AG04450 (cell line): ENCODE measurements at regions of chr6 and their contacts with region 1.

Region 1: GRCh38 chr6:25992413-25993037 is 29.9 kb downstream of the TRIM38 start:
- DNase-seq: peak; percentile 81
- H3K4me3 ChIP-seq: peak overlapping the region; percentile 70
- H3K27ac ChIP-seq: peak overlapping the region; percentile 83
- H3K27me3 ChIP-seq: no peaks in the 10 kb centered on the region
- CTCF ChIP-seq: peak; percentile 94

Region 2: GRCh38 chr6:25788305-25788922 is 204.1 kb before region 1 on chr6:
- CTCF ChIA-PET with region 1: interaction called, 16 read pairs
- POLR2A ChIA-PET with region 1: no interaction called
- DNase-seq: peak; percentile 13
- H3K4me3 ChIP-seq: no peak overlapping the region
- H3K27ac ChIP-seq: no peak overlapping the region
- H3K27me3 ChIP-seq: no peaks in the 10 kb centered on the region
- CTCF ChIP-seq: peak; percentile 62

Region 3: GRCh38 chr6:25971187-25971811 is 21.2 kb before region 1 on chr6:
- CTCF ChIA-PET with region 1: interaction called, 26 read pairs
- POLR2A ChIA-PET with region 1: interaction called, 6 read pairs
- DNase-seq: peak; percentile 59
- H3K4me3 ChIP-seq: no peak overlapping the region
- H3K27ac ChIP-seq: no peak overlapping the region
- H3K27me3 ChIP-seq: no peaks in the 10 kb centered on the region
- CTCF ChIP-seq: no peak

Region 4: GRCh38 chr6:25981568-25982263 is 10.8 kb before region 1 on chr6:
- CTCF ChIA-PET with region 1: interaction called, 49 read pairs
- POLR2A ChIA-PET with region 1: interaction called, 9 read pairs
- DNase-seq: no peak
- H3K4me3 ChIP-seq: no peak overlapping the region
- H3K27ac ChIP-seq: no peak overlapping the region
- H3K27me3 ChIP-seq: no peaks in the 10 kb centered on the region
- CTCF ChIP-seq: no peak

Region 5: DNA sequence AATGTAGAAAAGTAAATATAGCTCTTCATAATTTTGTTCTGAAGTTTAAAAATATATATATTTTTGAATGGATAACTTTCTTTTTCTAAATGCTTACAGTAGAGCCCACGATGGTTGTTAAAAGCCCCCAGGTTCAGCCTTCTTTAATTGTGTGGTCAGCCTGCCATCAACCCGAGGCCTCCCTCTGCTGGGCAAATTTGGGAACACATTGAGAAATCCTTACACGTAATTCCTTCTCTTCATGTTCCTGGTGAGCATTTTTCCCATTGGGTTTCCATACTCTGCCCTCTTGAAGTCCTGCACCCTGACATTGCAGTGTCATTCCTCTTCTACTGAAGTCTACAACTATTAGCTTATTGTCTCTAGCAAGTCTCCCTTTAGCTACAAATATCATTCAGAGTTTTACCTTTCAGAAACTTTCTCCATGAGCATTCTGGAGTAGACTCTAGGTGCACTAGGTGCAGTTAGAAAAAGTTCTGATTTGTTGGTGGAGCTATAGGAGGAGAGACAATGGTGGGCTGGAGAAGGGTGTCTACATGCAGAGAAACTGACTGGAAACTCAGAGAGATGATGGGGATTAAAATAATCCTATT is 10.7 kb after region 1 on chr6:
- CTCF ChIA-PET with region 1: interaction called, 178 read pairs
- POLR2A ChIA-PET with region 1: interaction called, 3 read pairs
- DNase-seq: no peak
- H3K4me3 ChIP-seq: no peak overlapping the region
- H3K27ac ChIP-seq: no peak overlapping the region
- H3K27me3 ChIP-seq: no peaks in the 10 kb centered on the region
- CTCF ChIP-seq: peak; percentile 86

Region 6: DNA sequence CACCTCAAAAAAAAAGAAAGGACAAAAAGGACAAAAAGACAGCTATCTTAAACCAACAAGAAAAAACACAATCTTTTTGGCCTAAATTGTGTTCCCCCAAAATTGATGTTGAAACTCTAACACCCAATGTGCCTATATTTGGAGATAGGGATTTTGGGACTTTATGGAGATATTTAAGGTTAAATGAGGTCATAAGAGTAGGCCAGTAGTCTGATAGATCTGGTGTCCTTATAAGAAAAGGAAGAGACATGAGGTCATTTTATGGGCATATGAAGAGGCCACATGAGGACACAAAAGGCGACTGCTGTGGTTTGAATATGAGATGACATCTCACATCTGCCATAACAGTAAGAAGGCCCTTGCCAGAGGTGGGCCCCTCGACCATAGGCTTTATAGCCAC is 19.5 kb after region 1 on chr6:
- CTCF ChIA-PET with region 1: interaction called, 178 read pairs
- POLR2A ChIA-PET with region 1: interaction called, 29 read pairs
- DNase-seq: no peak
- H3K4me3 ChIP-seq: no peak overlapping the region
- H3K27ac ChIP-seq: no peak overlapping the region
- H3K27me3 ChIP-seq: no peaks in the 10 kb centered on the region
- CTCF ChIP-seq: no peak

Region 7: DNA sequence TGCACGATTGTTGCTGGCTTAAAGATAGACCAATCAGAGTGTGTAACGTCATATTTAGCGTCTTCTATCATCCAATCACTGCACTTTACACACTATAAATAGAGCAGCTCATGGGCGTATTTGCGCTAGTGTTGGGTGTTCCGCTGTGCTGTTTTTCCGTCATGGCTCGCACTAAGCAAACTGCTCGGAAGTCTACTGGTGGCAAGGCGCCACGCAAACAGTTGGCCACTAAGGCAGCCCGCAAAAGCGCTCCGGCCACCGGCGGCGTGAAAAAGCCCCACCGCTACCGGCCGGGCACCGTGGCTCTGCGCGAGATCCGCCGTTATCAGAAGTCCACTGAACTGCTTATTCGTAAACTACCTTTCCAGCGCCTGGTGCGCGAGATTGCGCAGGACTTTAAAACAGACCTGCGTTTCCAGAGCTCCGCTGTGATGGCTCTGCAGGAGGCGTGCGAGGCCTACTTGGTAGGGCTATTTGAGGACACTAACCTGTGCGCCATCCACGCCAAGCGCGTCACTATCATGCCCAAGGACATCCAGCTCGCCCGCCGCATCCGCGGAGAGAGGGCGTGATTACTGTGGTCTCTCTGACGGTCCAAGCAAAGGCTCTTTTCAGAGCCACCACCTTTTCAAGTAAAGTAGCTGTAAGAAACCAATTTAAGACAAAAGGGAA is 27.9 kb after region 1 on chr6:
- CTCF ChIA-PET with region 1: interaction called, 61 read pairs
- POLR2A ChIA-PET with region 1: interaction called, 29 read pairs
- DNase-seq: peak; percentile 86
- H3K4me3 ChIP-seq: peak overlapping the region; percentile 71
- H3K27ac ChIP-seq: peak overlapping the region; percentile 98
- H3K27me3 ChIP-seq: no peaks in the 10 kb centered on the region
- CTCF ChIP-seq: no peak